PC-3 (cell line): ENCODE measurements at regions of chr9 and their contacts with region 1.

Region 1: GRCh38 chr9:27033823-27034403 is 28.4 kb upstream of the LRRC19 start:
- DNase-seq: peak; percentile 78
- ATAC-seq: peak; percentile 58
- H3K4me3 ChIP-seq: no peak overlapping the region
- H3K27ac ChIP-seq: no peak overlapping the region
- H3K4me1 ChIP-seq: no peaks in the 10 kb centered on the region
- H3K27me3 ChIP-seq: no peaks in the 10 kb centered on the region
- CTCF ChIP-seq: peak; percentile 78

Region 2: DNA sequence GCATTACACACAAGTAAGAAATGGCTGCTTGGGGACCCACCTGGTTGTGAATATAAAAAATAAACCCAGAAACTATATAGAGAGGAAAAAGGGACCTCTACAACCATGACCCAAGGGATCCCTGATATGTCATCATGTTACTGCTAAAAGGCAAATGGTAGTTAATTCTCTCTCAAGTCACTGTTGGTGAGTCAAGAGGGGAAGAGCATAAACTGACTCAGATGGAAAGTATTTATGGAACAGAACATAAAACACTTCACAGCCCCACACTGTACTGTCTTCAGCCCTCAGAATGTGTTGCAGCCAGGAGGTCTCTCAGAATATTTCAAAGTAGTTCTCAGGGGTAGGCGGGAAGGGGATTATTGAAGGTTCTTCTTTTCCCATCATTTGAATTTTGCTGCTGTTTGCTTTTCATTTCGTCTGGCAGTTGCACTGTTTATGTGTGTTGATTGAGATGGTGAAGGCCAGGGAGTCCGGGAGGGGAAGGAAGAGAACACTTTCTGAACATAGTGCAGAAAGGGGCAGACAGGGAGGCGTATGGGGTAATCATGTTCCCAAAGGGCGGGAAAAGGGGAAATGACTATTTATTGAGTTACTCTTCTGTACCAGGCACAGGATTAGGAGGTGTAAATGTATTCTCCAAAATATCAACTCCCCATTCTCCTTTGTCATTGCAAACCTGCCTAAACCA is 160.6 kb after region 1 on chr9:
- CTCF ChIA-PET with region 1: no interaction called
- POLR2A ChIA-PET with region 1: no interaction called
- intact Hi-C with region 1: loop called (anchors 5 kb)
- DNase-seq: peak; percentile 72
- ATAC-seq: peak; percentile 99
- H3K4me3 ChIP-seq: no peak overlapping the region
- H3K27ac ChIP-seq: 0 out of 2 replicates have a peak overlapping the region, but pooled peaks have one; percentile 6
- H3K4me1 ChIP-seq: peaks cover 16% of the 10 kb centered on the region
- H3K27me3 ChIP-seq: no peaks in the 10 kb centered on the region
- CTCF ChIP-seq: no peak

Region 3: DNA sequence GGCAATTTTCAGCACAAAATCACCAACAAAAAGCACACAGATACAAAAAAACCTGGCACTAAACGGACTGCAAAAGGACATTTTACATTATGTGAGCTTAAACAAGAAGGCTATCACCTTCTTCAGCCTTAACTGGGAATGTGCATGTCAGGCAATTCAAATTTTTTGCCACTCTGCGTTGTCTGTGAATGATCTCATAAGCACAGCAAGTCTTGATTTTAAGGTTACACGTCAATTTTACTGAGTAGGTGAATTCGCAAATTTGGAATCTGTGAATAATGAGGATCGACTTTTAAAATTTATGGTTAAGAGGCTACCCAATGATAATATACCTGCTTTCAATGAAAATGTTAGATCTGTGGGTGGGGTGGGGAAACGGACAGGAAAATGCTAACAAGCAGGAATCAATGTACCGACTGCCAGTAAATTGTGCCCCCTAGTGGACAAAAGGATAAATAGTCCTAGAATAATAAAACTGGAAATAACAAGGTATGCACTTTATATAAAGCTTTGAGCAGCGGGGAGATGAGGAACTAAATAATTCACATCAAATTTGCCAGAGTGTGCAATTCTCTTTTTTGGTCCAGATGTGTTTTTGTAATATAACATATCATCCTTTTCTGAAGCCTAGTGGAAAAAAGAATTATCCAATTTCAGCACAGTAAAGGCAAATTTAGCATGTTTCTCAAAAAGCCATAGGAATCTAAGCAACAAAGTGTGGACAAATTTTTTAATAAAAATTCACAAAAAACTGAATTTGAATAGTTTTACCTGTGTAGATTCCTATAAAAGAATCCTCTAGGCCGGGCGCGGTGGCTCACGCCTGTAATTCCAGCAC is 242.5 kb after region 1 on chr9:
- CTCF ChIA-PET with region 1: no interaction called
- POLR2A ChIA-PET with region 1: no interaction called
- intact Hi-C with region 1: loop called (anchors 1 kb)
- DNase-seq: peak; percentile 73
- ATAC-seq: peak; percentile 69
- H3K4me3 ChIP-seq: no peak overlapping the region
- H3K27ac ChIP-seq: no peak overlapping the region
- H3K4me1 ChIP-seq: no peaks in the 10 kb centered on the region
- H3K27me3 ChIP-seq: no peaks in the 10 kb centered on the region
- CTCF ChIP-seq: peak; percentile 78

Region 4: GRCh38 chr9:27548055-27548741 is 514.3 kb after region 1 on chr9:
- CTCF ChIA-PET with region 1: no interaction called
- POLR2A ChIA-PET with region 1: no interaction called
- intact Hi-C with region 1: loop called (anchors 10 kb)
- DNase-seq: peak; percentile 43
- ATAC-seq: peak; percentile 43; the same call in 1 of the 2 replicates
- H3K4me3 ChIP-seq: no peak overlapping the region
- H3K27ac ChIP-seq: no peak overlapping the region
- H3K4me1 ChIP-seq: no peaks in the 10 kb centered on the region
- H3K27me3 ChIP-seq: no peaks in the 10 kb centered on the region
- CTCF ChIP-seq: peak; percentile 60